IMR-90 (cell line): ENCODE measurements at regions of chr20 and their contacts with region 1.

Region 1: GRCh38 chr20:45362804-45363610 is at the start of gene SYS1:
- DNase-seq: peak; percentile 98
- ATAC-seq: peak; percentile 91
- H3K4me3 ChIP-seq: peak within 1 kb of the TSS; percentile 65
- H3K27ac ChIP-seq: peak within 1 kb of the TSS; percentile 94
- H3K4me1 ChIP-seq: peaks cover 17% of the 10 kb centered on the region
- H3K27me3 ChIP-seq: no peaks in the 10 kb centered on the region
- CTCF ChIP-seq: peak; percentile 98
- POLR2A ChIP-seq: peak; percentile 97
- RAD21 ChIP-seq: peak; percentile 84
- total RNA-seq, gene SYS1: 12.9 and 16.7 TPM in 2 replicates

Region 2: DNA sequence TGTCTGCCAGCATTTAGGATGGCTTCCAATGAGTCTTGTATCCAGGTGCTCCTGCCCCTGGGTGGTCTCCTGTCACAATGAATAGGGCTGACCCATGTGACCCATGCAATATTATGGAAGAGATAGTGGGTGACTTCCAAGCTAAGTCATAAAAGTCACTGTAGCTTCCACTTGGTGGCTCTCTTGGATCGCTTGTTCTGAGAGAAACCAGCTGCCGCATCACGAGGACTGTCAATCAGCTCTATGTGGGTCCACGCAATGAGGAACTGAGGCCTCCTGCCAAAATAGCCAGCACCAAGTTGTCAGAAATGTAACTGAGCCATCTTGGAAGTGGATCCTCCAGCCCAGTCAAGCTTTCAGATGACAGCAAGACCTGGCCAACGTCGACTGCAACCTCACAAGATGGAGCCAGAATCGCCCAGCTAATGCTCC is 40.0 kb before region 1 on chr20:
- CTCF ChIA-PET with region 1: interaction called, 6 read pairs
- POLR2A ChIA-PET with region 1: no interaction called
- dilution Hi-C with region 1: no loop called
- in situ Hi-C with region 1: no loop called
- intact Hi-C with region 1: loop called (anchors 1 kb)
- DNase-seq: peak; percentile 43
- ATAC-seq: peak; percentile 8; the same call in 1 of the 2 replicates
- H3K4me3 ChIP-seq: no peak overlapping the region
- H3K27ac ChIP-seq: no peak overlapping the region
- H3K4me1 ChIP-seq: no peaks in the 10 kb centered on the region
- H3K27me3 ChIP-seq: peaks cover 5% of the 10 kb centered on the region; the same call in 1 of the 2 replicates
- CTCF ChIP-seq: peak; percentile 30; the same call in 1 of the 2 replicates
- POLR2A ChIP-seq: no peak
- RAD21 ChIP-seq: peak; percentile 30; the same call in 1 of the 2 replicates

Region 3: DNA sequence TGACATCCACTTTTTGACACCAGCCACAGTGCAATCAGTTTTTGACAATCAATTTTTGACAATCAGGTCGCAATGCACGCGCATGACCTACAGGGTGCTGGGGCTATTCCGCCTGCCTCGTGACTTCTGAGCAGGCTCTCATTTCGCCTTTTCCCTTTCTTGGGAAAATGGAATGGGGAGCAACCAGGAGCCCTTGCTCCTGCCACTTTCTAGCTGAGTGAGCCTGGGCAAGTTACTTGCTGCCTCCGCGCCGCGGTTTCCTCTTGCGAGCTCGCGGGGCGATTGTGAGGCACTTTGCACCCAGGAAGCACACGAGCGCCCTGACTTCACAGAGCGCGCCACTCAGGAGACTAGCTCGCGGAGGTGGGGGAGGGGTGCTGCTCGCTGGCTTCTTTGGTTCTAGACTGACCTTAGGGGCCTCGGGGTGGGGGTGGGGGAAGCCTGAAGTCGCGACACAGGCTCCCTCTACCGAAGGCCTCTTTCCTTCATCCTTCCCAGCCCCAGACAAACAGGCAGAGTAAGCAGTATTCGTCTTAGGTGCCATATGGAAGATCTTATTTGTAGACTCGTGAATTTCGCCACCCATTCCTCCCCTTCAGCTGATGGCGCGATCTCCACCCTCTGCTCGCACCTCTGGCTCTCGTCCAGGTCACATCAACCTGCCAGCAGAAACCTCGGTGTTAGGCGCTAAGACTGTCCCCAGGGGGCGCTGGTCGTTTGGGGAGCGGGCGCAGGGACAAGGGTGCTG is 10.5 kb after region 1 on chr20:
- CTCF ChIA-PET with region 1: interaction called, 13 read pairs
- POLR2A ChIA-PET with region 1: interaction called, 4 read pairs
- dilution Hi-C with region 1: no loop called
- in situ Hi-C with region 1: no loop called
- intact Hi-C with region 1: no loop called
- DNase-seq: peak; percentile 66
- ATAC-seq: peak; percentile 89
- H3K4me3 ChIP-seq: peak overlapping the region; percentile 37
- H3K27ac ChIP-seq: no peak overlapping the region
- H3K4me1 ChIP-seq: no peaks in the 10 kb centered on the region; the same call in 1 of the 2 replicates
- H3K27me3 ChIP-seq: no peaks in the 10 kb centered on the region
- CTCF ChIP-seq: peak; percentile 80
- POLR2A ChIP-seq: no peak
- RAD21 ChIP-seq: peak; percentile 75

Region 4: GRCh38 chr20:45415774-45416637 is 53.0 kb after region 1 on chr20 and contains the start of gene PIGT:
- CTCF ChIA-PET with region 1: no interaction called
- POLR2A ChIA-PET with region 1: no interaction called
- dilution Hi-C with region 1: no loop called
- in situ Hi-C with region 1: no loop called
- intact Hi-C with region 1: loop called (anchors 5 kb)
- DNase-seq: peak; percentile 72
- ATAC-seq: peak; percentile 97
- H3K4me3 ChIP-seq: peak within 1 kb of the TSS; percentile 90
- H3K27ac ChIP-seq: peak within 1 kb of the TSS; percentile 90
- H3K4me1 ChIP-seq: peaks cover 9% of the 10 kb centered on the region; the same call in 1 of the 2 replicates
- H3K27me3 ChIP-seq: no peaks in the 10 kb centered on the region
- CTCF ChIP-seq: 0 out of 2 replicates have a peak, but pooled peaks have one; percentile 0
- POLR2A ChIP-seq: peak; percentile 91
- RAD21 ChIP-seq: peak; percentile 18; the same call in 1 of the 2 replicates
- total RNA-seq, gene PIGT: 27.2 and 31.2 TPM in 2 replicates

Region 5: GRCh38 chr20:45436732-45437391 is 73.9 kb after region 1 on chr20:
- CTCF ChIA-PET with region 1: interaction called, 16 read pairs
- POLR2A ChIA-PET with region 1: no interaction called
- dilution Hi-C with region 1: no loop called
- in situ Hi-C with region 1: loop called (anchors 5 kb)
- intact Hi-C with region 1: loop called (anchors 1 kb)
- DNase-seq: peak; percentile 81
- ATAC-seq: peak; percentile 100
- H3K4me3 ChIP-seq: peak overlapping the region; percentile 75
- H3K27ac ChIP-seq: peak overlapping the region; percentile 42
- H3K4me1 ChIP-seq: no peaks in the 10 kb centered on the region
- H3K27me3 ChIP-seq: peaks cover 3% of the 10 kb centered on the region
- CTCF ChIP-seq: peak; percentile 91
- POLR2A ChIP-seq: 0 out of 2 replicates have a peak, but pooled peaks have one; percentile 37
- RAD21 ChIP-seq: peak; percentile 91